Calu3 (cell line): ENCODE measurements at regions of chr4 and their contacts with region 1.

Region 1: GRCh38 chr4:90445380-90445779 is 318.2 kb downstream of the CCSER1 start:
- DNase-seq: no peak
- H3K4me3 Mint-ChIP-seq: peak overlapping the region; percentile 33
- H3K27ac Mint-ChIP-seq: peak overlapping the region; percentile 60
- H3K4me1 Mint-ChIP-seq: peaks cover 28% of the 10 kb centered on the region
- H3K27me3 Mint-ChIP-seq: no peaks in the 10 kb centered on the region
- CTCF ChIP-seq: no peak

Region 2: GRCh38 chr4:90495936-90496335 is 50.6 kb after region 1 on chr4:
- CTCF ChIA-PET with region 1: no interaction called
- intact Hi-C with region 1: no loop called
- DNase-seq: no peak
- H3K4me3 Mint-ChIP-seq: no peak overlapping the region
- H3K27ac Mint-ChIP-seq: no peak overlapping the region
- H3K4me1 Mint-ChIP-seq: no peaks in the 10 kb centered on the region
- H3K27me3 Mint-ChIP-seq: no peaks in the 10 kb centered on the region
- CTCF ChIP-seq: no peak

Region 3: GRCh38 chr4:90546114-90546513 is 100.7 kb after region 1 on chr4:
- CTCF ChIA-PET with region 1: no interaction called
- intact Hi-C with region 1: loop called (anchors 10 kb)
- DNase-seq: peak; percentile 4
- H3K4me3 Mint-ChIP-seq: no peak overlapping the region
- H3K27ac Mint-ChIP-seq: no peak overlapping the region
- H3K4me1 Mint-ChIP-seq: peaks cover 11% of the 10 kb centered on the region
- H3K27me3 Mint-ChIP-seq: no peaks in the 10 kb centered on the region
- CTCF ChIP-seq: no peak